GM18951 (cell line): ENCODE measurements at regions of chrX and their contacts with region 1.

Region 1: DNA sequence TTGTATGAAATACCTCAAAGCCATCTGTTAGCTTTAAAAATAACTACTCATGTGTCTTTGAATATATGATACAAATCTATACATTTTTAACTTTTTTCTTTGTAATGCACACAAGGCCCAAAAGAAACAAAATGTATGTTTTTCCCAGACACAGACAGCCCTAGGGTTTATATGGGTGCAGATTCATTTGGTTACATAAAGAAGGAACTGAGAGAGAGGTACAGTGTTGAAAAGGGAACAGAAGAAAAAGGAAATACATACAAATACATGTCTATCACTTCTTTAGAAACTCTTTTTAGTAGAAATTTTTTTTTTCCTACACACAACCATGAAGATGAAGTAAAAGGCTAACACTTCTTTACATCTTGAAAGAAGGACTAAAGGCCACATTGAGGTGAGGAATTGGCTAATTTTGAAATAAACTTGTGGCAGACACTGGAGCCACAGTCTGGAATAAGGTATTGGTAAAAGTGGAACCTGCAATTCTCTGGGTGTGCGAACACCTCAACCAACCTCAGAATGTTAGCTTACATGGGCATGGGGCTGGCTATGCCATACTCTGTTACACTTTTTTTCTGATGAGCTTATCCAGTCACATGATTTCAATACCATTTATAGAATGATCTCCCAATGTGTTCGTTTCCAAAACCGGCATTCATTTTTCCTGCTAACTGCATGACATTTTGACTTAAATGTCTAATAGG is 67.9 kb downstream of the FAM47C start:
- POLR2A ChIP-seq: no peak

Region 2: DNA sequence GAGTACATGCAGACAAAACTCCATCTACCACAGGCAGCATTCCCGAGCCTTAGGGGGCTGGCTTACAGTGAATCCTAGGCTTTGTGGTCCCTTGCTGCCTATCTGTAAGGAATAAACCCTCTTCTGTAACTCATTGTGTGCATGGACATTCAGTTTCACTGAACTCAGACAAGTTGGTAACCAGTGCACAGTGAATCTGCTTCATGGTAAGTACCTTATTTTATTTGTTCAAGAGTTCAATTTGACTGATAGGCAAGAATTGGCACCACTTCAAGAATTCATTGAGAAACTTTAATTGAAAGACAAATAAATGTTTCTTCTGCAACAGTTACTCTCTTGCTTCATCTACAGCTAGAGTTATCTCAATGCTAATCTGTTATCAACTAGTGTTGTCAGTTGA is 215.9 kb after region 1 on chrX:
- in situ Hi-C with region 1: loop called (anchors 5 kb)
- POLR2A ChIP-seq: no peak

Region 3: DNA sequence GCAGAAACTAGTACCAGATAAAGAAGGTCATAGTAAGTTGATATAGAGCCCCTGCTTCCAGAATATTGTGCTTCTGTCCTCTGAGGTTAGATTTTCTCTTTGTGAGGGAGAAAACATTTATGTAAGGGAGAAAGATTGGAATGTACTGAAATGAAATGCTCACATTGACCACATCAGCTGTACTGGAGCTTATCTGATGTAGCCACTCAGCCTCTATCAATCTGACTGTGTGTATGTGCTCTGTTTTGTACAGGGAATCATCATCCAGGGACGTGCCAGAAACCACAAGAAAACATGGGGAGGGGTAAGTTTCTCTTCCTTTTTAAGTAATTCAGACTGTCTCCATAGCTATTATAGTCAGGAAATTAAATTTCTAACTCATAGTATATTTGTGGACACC is 329.9 kb after region 1 on chrX:
- in situ Hi-C with region 1: no loop called
- POLR2A ChIP-seq: no peak